ENCODE measurements at regions of chr14 and their contacts with region 1.

Region 1: GRCh38 chr14:54622192-54622958 is 55.4 kb downstream of the SAMD4A start:
- DNase-seq: no peak
- ATAC-seq: peak in 1 of 4 donors; percentile 26
- H3K4me3 ChIP-seq: no peak overlapping the region
- H3K27ac ChIP-seq: no peak overlapping the region
- H3K4me1 ChIP-seq: peaks cover 6 to 58% (median 30%) of the 10 kb centered on the region in 12 donors
- H3K27me3 ChIP-seq: no peaks in the 10 kb centered on the region
- CTCF ChIP-seq: no peak
- POLR2A ChIP-seq: no peak

Region 2: DNA sequence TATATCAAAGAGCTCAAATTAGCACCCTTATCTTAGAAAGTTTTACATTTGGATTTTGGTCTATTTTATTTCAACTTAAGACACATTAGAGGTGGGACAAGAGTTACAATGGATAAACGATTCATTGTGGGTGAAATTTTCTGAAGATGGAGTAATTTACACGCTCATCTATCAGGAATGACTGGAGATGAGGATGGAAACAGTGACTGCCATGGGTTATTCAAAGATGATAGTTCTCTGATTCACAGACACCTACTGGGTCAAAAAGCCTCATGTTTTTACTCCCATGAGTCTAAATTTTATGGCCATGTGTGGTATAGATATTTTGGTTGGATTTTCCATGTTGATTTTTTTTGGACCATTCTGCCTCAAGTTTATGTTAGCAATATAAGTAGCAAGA is 33.3 kb before region 1 on chr14:
- intact Hi-C with region 1: loop called in 1 of 10 experiments (anchors 5 kb)
- DNase-seq: no peak
- ATAC-seq: no peak
- H3K4me3 ChIP-seq: no peak overlapping the region
- H3K27ac ChIP-seq: no peak overlapping the region
- H3K4me1 ChIP-seq: peaks cover 2 to 54% (median 30%) of the 10 kb centered on the region in 12 donors
- H3K27me3 ChIP-seq: no peaks in the 10 kb centered on the region
- CTCF ChIP-seq: no peak
- POLR2A ChIP-seq: no peak